GM12878 (cell line): ENCODE measurements at regions of chr12 and their contacts with region 1.

Region 1: GRCh38 chr12:76790564-76791552 is 26.9 kb downstream of the ZDHHC17 start:
- DNase-seq: no peak
- ATAC-seq: peak; percentile 62
- H3K4me3 ChIP-seq: no peak overlapping the region
- H3K27ac ChIP-seq: no peak overlapping the region
- H3K4me1 ChIP-seq: no peaks in the 10 kb centered on the region
- H3K27me3 ChIP-seq: no peaks in the 10 kb centered on the region
- CTCF ChIP-seq: peak; percentile 31 to 53 (median 42); a peak in 4 of 6 replicates
- EP300 ChIP-seq: no peak
- POLR2A ChIP-seq: no peak
- RAD21 ChIP-seq: peak; percentile 83

Region 2: GRCh38 chr12:76621582-76622024 is 169.3 kb before region 1 on chr12:
- CTCF ChIA-PET with region 1: interaction called, 118 read pairs
- POLR2A ChIA-PET with region 1: no interaction called
- RAD21 ChIA-PET with region 1: interaction called, 21 read pairs
- SMC1A ChIA-PET with region 1: interaction called, 37 read pairs
- in situ Hi-C with region 1: loop called (anchors 5 kb)
- intact Hi-C with region 1: loop called (anchors 1 kb)
- DNase-seq: peak; percentile 21
- ATAC-seq: peak; percentile 88
- H3K4me3 ChIP-seq: no peak overlapping the region
- H3K27ac ChIP-seq: no peak overlapping the region
- H3K4me1 ChIP-seq: no peaks in the 10 kb centered on the region
- H3K27me3 ChIP-seq: no peaks in the 10 kb centered on the region
- CTCF ChIP-seq: peak; percentile 84 to 93 (median 86)
- EP300 ChIP-seq: no peak
- POLR2A ChIP-seq: no peak
- RAD21 ChIP-seq: peak; percentile 99

Region 3: GRCh38 chr12:76685246-76685678 is 105.6 kb before region 1 on chr12:
- CTCF ChIA-PET with region 1: interaction called, 53 read pairs
- POLR2A ChIA-PET with region 1: no interaction called
- RAD21 ChIA-PET with region 1: interaction called, 3 read pairs
- SMC1A ChIA-PET with region 1: interaction called, 15 read pairs
- in situ Hi-C with region 1: no loop called
- intact Hi-C with region 1: loop called (anchors 2 kb)
- DNase-seq: no peak
- ATAC-seq: no peak
- H3K4me3 ChIP-seq: no peak overlapping the region
- H3K27ac ChIP-seq: no peak overlapping the region
- H3K4me1 ChIP-seq: no peaks in the 10 kb centered on the region
- H3K27me3 ChIP-seq: no peaks in the 10 kb centered on the region; a peak in 2 of 4 replicates
- CTCF ChIP-seq: no peak
- EP300 ChIP-seq: no peak
- POLR2A ChIP-seq: no peak
- RAD21 ChIP-seq: no peak

Region 4: GRCh38 chr12:76777765-76778216 is 13.1 kb before region 1 on chr12:
- CTCF ChIA-PET with region 1: interaction called, 30 read pairs
- POLR2A ChIA-PET with region 1: no interaction called
- RAD21 ChIA-PET with region 1: interaction called, 14 read pairs
- SMC1A ChIA-PET with region 1: interaction called, 10 read pairs
- in situ Hi-C with region 1: no loop called
- intact Hi-C with region 1: no loop called
- DNase-seq: peak; percentile 53
- ATAC-seq: peak; percentile 98
- H3K4me3 ChIP-seq: 0 out of 2 replicates have a peak overlapping the region, but pooled peaks have one; percentile 8
- H3K27ac ChIP-seq: peak overlapping the region; percentile 58
- H3K4me1 ChIP-seq: peaks cover 13% of the 10 kb centered on the region
- H3K27me3 ChIP-seq: no peaks in the 10 kb centered on the region
- CTCF ChIP-seq: no peak
- EP300 ChIP-seq: peak; percentile 29 to 90; a peak in 3 of 4 replicates
- POLR2A ChIP-seq: no peak
- RAD21 ChIP-seq: no peak

Region 5: DNA sequence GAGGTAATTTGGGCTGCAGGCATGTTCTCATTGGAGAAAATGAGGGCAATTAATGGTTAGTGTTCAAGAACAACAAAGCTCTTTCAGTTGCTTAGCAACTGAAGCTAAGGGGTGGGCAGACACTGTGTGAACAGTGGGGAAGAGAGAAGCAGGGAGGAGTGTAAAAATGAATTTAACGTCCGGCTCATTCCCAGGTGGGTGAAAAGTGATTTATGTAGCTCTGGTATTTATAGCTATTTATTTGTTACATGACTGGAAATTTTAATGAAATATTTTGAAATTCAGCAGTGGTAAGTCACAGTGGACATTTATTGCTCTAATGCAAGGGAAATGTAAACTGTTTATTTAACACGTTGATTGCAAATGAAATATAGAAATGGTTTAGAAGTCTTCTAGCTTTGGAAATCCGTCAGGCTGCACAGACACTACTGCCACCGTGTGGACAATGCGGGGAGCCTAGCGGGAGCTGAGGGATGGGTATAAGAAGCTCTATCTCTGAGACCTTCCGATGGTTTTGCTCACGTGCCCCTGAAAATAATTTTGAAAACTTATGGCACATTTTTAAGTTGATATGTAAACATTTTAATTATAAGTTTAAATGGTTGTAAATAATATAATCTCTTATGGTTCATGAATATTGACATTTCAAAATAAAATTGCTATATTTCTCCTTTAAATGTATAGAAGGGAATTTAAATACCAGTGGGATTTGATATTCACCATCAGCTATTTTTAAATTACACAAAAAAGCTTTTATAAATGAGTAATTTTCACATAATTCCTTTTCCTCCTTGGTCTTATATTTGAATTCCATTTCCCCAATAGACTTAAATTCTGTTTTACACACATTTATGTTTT is 220.1 kb after region 1 on chr12:
- CTCF ChIA-PET with region 1: interaction called, 20 read pairs
- POLR2A ChIA-PET with region 1: no interaction called
- RAD21 ChIA-PET with region 1: interaction called, 6 read pairs
- SMC1A ChIA-PET with region 1: interaction called, 9 read pairs
- in situ Hi-C with region 1: no loop called
- intact Hi-C with region 1: loop called (anchors 10 kb)
- DNase-seq: peak; percentile 7
- ATAC-seq: peak; percentile 97
- H3K4me3 ChIP-seq: no peak overlapping the region
- H3K27ac ChIP-seq: no peak overlapping the region
- H3K4me1 ChIP-seq: no peaks in the 10 kb centered on the region
- H3K27me3 ChIP-seq: no peaks in the 10 kb centered on the region
- CTCF ChIP-seq: peak; percentile 85 to 95 (median 94)
- EP300 ChIP-seq: no peak
- POLR2A ChIP-seq: no peak
- RAD21 ChIP-seq: peak; percentile 83

Region 6: DNA sequence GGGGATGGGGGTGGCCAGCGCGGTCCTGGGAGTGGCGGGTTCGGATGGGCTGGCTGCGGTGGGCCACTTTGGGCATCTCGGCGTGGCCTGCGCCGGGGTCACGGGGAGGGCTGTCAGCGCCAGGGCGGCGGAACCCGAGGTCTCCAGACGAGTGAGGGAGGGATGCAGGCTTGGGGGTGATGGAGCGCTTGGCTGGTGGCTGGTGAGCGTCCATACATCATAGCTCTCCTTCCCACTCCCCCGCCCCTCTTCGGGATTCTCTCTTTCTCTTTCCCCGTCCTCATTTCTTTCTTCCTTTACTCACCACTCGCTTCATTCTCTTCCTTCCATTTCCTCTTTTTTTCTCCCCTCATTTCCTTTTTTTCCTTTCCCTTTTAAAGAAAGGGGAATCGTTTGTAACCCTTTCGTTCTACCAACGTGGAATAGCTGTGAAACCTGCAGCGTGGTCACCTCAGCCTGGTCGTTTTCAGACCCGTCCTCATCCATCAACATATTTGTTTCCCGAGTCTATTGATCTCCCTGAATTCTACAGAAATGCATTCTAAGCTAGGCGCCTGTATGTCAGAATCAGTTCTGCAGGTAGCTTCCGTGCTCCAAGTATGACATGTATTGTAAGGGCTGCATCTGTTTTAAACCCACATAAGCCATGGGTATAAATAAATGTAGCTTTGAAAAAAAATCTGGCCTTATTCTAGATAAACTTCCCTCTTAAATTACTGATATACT is 534.8 kb after region 1 on chr12:
- CTCF ChIA-PET with region 1: no interaction called
- POLR2A ChIA-PET with region 1: no interaction called
- RAD21 ChIA-PET with region 1: no interaction called
- SMC1A ChIA-PET with region 1: no interaction called
- in situ Hi-C with region 1: no loop called
- intact Hi-C with region 1: no loop called
- DNase-seq: no peak
- ATAC-seq: no peak
- H3K4me3 ChIP-seq: 0 out of 2 replicates have a peak overlapping the region, but pooled peaks have one; percentile 53
- H3K27ac ChIP-seq: no peak overlapping the region
- H3K4me1 ChIP-seq: no peaks in the 10 kb centered on the region; the same call in none of the 2 replicates
- H3K27me3 ChIP-seq: peaks cover 0 to 6% of the 10 kb centered on the region in 2 experiments; a peak in 1 of 4 replicates
- CTCF ChIP-seq: no peak
- EP300 ChIP-seq: no peak
- POLR2A ChIP-seq: no peak
- RAD21 ChIP-seq: no peak